HepG2 (cell line): ENCODE measurements at regions of chr6 and their contacts with region 1.

Region 1: GRCh38 chr6:170296746-170297575 is 6.1 kb upstream of the DLL1 start:
- DNase-seq: no peak
- ATAC-seq: peak; percentile 34; the same call in 2 of the 3 replicates
- H3K4me3 ChIP-seq: no peak overlapping the region; a peak in 1 of 6 replicates
- H3K27ac ChIP-seq: no peak overlapping the region
- H3K4me1 ChIP-seq: peaks cover 22% of the 10 kb centered on the region
- H3K27me3 ChIP-seq: peaks cover 19 to 62% of the 10 kb centered on the region in 2 experiments
- CTCF ChIP-seq: no peak
- EP300 ChIP-seq: no peak
- POLR2A ChIP-seq: no peak
- RAD21 ChIP-seq: no peak

Region 2: DNA sequence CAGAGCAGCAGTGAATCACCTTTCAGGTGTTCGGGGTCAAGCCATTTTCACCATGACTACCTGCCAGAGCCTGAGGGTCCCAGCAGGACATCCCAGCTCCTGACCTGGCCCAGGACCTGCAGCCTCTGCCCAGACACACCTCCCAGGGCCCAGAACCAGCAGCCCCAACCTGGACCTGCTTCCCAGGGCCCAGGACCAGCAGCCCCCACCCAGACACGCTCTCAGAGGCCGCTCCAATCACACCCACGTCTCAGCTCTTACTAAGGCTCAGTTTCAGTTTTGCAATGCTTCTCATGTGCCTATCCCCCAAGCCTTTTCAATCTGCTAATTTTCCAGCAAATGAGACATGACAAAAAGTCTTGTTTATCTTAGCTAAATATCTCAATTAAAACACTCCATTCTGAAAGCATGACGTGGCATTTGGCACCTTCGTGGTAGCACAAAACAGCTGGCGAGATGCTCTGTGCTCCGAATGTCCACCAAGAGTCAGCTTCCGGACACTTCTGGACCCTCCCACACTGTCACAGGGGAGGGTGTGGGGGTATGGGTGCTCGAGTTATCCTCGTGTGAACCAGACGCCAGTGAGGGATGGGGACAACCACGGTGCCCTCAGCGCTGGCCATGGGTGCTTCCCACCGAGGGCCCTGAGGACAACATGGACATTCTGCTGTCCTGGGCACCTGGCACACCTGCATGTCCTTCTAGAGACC is 259.3 kb before region 1 on chr6:
- CTCF ChIA-PET with region 1: no interaction called
- POLR2A ChIA-PET with region 1: no interaction called
- in situ Hi-C with region 1: no loop called
- intact Hi-C with region 1: no loop called
- DNase-seq: no peak
- ATAC-seq: no peak
- H3K4me3 ChIP-seq: no peak overlapping the region
- H3K27ac ChIP-seq: no peak overlapping the region
- H3K4me1 ChIP-seq: peaks cover 18% of the 10 kb centered on the region
- H3K27me3 ChIP-seq: peaks cover 3 to 56% of the 10 kb centered on the region in 2 experiments
- CTCF ChIP-seq: no peak
- EP300 ChIP-seq: no peak
- POLR2A ChIP-seq: no peak
- RAD21 ChIP-seq: no peak

Region 3: DNA sequence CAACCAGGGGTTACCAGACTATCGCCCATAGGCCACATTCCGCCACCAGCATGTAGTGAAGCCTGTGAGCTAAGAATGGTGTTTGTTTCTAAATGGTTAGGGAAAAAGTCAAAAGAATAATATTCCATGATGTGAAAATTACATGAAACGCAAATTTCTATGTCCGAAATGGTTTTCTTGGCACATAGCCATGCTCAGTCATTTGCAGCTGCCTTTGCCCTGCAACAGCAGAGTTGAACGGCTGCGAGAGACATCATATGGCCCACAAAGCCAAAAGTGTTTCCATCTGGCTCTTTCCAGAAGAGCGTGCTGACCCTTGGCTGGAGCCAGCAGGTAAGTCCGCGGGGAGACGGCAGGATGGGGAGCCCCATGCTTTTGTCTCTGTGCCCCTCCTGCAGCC is 70.3 kb after region 1 on chr6:
- CTCF ChIA-PET with region 1: no interaction called
- POLR2A ChIA-PET with region 1: no interaction called
- in situ Hi-C with region 1: no loop called
- intact Hi-C with region 1: loop called (anchors 1 kb)
- DNase-seq: no peak
- ATAC-seq: no peak
- H3K4me3 ChIP-seq: no peak overlapping the region
- H3K27ac ChIP-seq: no peak overlapping the region
- H3K4me1 ChIP-seq: peaks cover 56% of the 10 kb centered on the region
- H3K27me3 ChIP-seq: no peaks in the 10 kb centered on the region
- CTCF ChIP-seq: no peak
- EP300 ChIP-seq: no peak
- POLR2A ChIP-seq: no peak
- RAD21 ChIP-seq: no peak